Psoas muscle (tissue), 8 donors: ENCODE measurements at regions of chr17 and their contacts with region 1.

Region 1: DNA sequence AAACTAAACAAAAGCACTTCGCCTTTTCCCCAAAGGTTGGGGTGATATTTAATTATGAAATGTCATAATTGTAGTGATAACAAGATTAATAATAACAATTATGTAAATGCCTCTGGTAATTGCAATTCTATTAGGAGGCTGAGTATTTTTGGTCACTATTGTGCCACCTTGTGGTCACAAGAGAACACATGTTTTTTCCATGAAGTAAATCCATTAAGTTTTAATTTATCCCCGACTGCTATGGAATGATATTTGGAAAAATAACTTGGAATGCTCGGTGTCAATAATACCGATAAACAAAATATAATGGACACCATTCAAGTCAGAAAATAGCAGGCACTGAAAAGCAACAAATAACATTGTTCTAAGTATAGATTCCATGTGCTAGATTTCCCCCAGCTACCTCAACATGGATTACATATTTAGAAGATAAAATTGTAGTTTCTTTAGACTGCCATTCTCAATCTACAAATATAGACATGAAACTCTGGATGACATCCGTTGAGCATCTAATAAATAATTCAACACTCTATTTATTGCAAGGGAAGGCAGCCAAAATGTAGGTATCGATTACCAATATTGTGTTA is 25.0 kb upstream of the KCNJ2 start:
- DNase-seq: no peak
- ATAC-seq: peak in 1 of 4 donors; percentile 77
- H3K4me3 ChIP-seq: no peak overlapping the region
- H3K27ac ChIP-seq: no peak overlapping the region
- H3K4me1 ChIP-seq: no peaks in the 10 kb centered on the region
- H3K27me3 ChIP-seq: no peaks in the 10 kb centered on the region
- CTCF ChIP-seq: peak; percentile 82

Region 2: GRCh38 chr17:69575346-69575761 is 569.0 kb before region 1 on chr17:
- intact Hi-C with region 1: loop called (anchors 5 to 10 kb)
- DNase-seq: no peak
- ATAC-seq: no peak
- H3K4me3 ChIP-seq: no peak overlapping the region
- H3K27ac ChIP-seq: peak overlapping the region; percentile 11
- H3K4me1 ChIP-seq: peaks cover 3% of the 10 kb centered on the region
- H3K27me3 ChIP-seq: no peaks in the 10 kb centered on the region
- CTCF ChIP-seq: no peak

Region 3: DNA sequence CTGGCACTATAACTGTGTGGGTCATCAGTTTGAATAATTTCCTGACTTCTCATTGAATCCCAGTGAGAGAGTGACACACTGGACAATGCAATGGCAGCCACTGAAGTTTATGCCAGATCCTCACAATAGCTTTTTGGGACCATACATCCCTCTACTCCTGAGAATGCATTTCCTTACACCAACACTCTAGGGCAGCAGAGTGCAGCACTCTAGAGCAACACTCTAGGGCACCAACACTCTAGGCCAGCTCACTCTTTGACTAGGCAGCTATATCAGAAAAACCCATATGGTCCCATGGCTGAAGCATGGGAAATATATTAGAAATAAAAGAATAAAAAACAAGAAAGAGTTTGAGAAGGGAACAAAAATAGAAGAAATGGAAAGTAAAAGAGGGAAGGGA is 420.6 kb before region 1 on chr17:
- intact Hi-C with region 1: loop called in 1 of 2 experiments (anchors 10 kb)
- DNase-seq: no peak
- ATAC-seq: peak in 1 of 4 donors; percentile 67
- H3K4me3 ChIP-seq: no peak overlapping the region
- H3K27ac ChIP-seq: no peak overlapping the region
- H3K4me1 ChIP-seq: peaks cover 7% of the 10 kb centered on the region
- H3K27me3 ChIP-seq: no peaks in the 10 kb centered on the region
- CTCF ChIP-seq: no peak

Region 4: GRCh38 chr17:70089513-70090148 is 54.7 kb before region 1 on chr17:
- intact Hi-C with region 1: no loop called
- DNase-seq: no peak
- ATAC-seq: no peak
- H3K4me3 ChIP-seq: no peak overlapping the region
- H3K27ac ChIP-seq: no peak overlapping the region
- H3K4me1 ChIP-seq: no peaks in the 10 kb centered on the region
- H3K27me3 ChIP-seq: no peaks in the 10 kb centered on the region
- CTCF ChIP-seq: no peak